ENCODE measurements at regions of chr3 and their contacts with region 1.

Region 1: GRCh38 chr3:190384241-190384863 is 3.6 kb upstream of the CLDN16 start:
- DNase-seq: peak; percentile 93
- H3K4me3 Mint-ChIP-seq: no peak overlapping the region
- H3K27ac Mint-ChIP-seq: peak overlapping the region; percentile 97
- H3K4me1 Mint-ChIP-seq: peaks cover 50% of the 10 kb centered on the region
- H3K27me3 Mint-ChIP-seq: no peaks in the 10 kb centered on the region
- CTCF ChIP-seq: peak; percentile 88

Region 2: GRCh38 chr3:189967254-189967865 is 417.0 kb before region 1 on chr3:
- CTCF ChIA-PET with region 1: interaction called, 8 read pairs
- POLR2A ChIA-PET with region 1: interaction called, 5 read pairs
- intact Hi-C with region 1: loop called (anchors 1 kb)
- DNase-seq: peak; percentile 76
- H3K4me3 Mint-ChIP-seq: no peak overlapping the region
- H3K27ac Mint-ChIP-seq: no peak overlapping the region
- H3K4me1 Mint-ChIP-seq: no peaks in the 10 kb centered on the region
- H3K27me3 Mint-ChIP-seq: no peaks in the 10 kb centered on the region
- CTCF ChIP-seq: peak; percentile 72

Region 3: GRCh38 chr3:190217081-190217480 is 167.3 kb before region 1 on chr3:
- CTCF ChIA-PET with region 1: interaction called, 14 read pairs
- POLR2A ChIA-PET with region 1: interaction called, 3 read pairs
- intact Hi-C with region 1: no loop called
- DNase-seq: peak; percentile 73
- H3K4me3 Mint-ChIP-seq: no peak overlapping the region
- H3K27ac Mint-ChIP-seq: no peak overlapping the region
- H3K4me1 Mint-ChIP-seq: no peaks in the 10 kb centered on the region
- H3K27me3 Mint-ChIP-seq: no peaks in the 10 kb centered on the region
- CTCF ChIP-seq: no peak

Region 4: GRCh38 chr3:190339130-190339529 is 45.2 kb before region 1 on chr3:
- CTCF ChIA-PET with region 1: interaction called, 19 read pairs
- POLR2A ChIA-PET with region 1: interaction called, 132 read pairs
- intact Hi-C with region 1: no loop called
- DNase-seq: peak; percentile 51
- H3K4me3 Mint-ChIP-seq: no peak overlapping the region
- H3K27ac Mint-ChIP-seq: peak overlapping the region; percentile 55
- H3K4me1 Mint-ChIP-seq: peaks cover 37% of the 10 kb centered on the region
- H3K27me3 Mint-ChIP-seq: no peaks in the 10 kb centered on the region
- CTCF ChIP-seq: peak; percentile 17

Region 5: GRCh38 chr3:190414297-190414696 is 29.9 kb after region 1 on chr3:
- CTCF ChIA-PET with region 1: interaction called, 10 read pairs
- POLR2A ChIA-PET with region 1: interaction called, 4 read pairs
- intact Hi-C with region 1: no loop called
- DNase-seq: no peak
- H3K4me3 Mint-ChIP-seq: no peak overlapping the region
- H3K27ac Mint-ChIP-seq: no peak overlapping the region
- H3K4me1 Mint-ChIP-seq: no peaks in the 10 kb centered on the region
- H3K27me3 Mint-ChIP-seq: no peaks in the 10 kb centered on the region
- CTCF ChIP-seq: no peak

Region 6: DNA sequence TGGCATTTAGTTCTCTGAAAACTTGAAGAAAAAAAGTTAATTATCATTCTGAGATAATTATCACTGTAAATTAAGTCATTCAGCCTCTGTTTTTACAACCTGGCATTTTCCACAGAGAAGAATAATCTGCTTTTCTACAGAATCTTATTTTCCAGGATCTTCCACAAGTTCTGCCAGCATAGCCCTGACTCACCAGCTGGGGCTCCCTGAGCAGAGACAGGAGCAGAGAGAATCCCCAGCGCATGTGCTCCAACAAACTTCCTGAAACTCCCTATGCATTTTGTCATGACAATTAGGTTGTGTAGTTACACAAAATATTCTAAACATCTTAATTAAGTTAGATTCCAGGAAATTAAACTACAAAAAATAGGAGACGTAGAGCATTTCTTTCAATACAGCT is 97.4 kb after region 1 on chr3:
- CTCF ChIA-PET with region 1: no interaction called
- POLR2A ChIA-PET with region 1: no interaction called
- intact Hi-C with region 1: no loop called
- DNase-seq: no peak
- H3K4me3 Mint-ChIP-seq: no peak overlapping the region
- H3K27ac Mint-ChIP-seq: no peak overlapping the region
- H3K4me1 Mint-ChIP-seq: no peaks in the 10 kb centered on the region
- H3K27me3 Mint-ChIP-seq: no peaks in the 10 kb centered on the region
- CTCF ChIP-seq: no peak

Region 7: GRCh38 chr3:190694335-190695001 is 310.1 kb after region 1 on chr3:
- CTCF ChIA-PET with region 1: interaction called, 50 read pairs
- POLR2A ChIA-PET with region 1: interaction called, 6 read pairs
- intact Hi-C with region 1: loop called (anchors 1 kb)
- DNase-seq: no peak
- H3K4me3 Mint-ChIP-seq: no peak overlapping the region
- H3K27ac Mint-ChIP-seq: no peak overlapping the region
- H3K4me1 Mint-ChIP-seq: peaks cover 5% of the 10 kb centered on the region
- H3K27me3 Mint-ChIP-seq: no peaks in the 10 kb centered on the region
- CTCF ChIP-seq: no peak